ENCODE measurements at regions of chr17 and their contacts with region 1.

Region 1: DNA sequence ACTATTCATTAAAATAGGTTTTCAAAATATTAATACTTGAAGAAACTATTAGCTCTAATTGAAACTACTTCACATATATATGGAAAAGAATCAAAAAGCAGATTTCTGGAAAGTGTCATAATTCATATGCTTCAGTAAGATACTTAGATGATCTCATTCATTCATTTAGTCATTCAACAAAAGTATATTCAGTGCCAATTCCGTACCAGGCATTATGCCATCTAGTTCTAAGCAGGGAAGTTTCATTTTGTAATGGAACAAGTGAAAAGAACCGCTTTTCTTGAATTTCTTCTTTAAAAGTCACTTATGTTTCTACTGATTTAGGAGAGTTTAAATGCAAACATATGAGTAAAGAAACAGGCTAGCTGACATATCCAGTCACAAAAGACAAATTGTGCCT is 118.3 kb upstream of the FAM20A start:
- DNase-seq: no peak
- ATAC-seq: no peak
- H3K4me3 ChIP-seq: no peak overlapping the region
- H3K27ac ChIP-seq: no peak overlapping the region
- H3K4me1 ChIP-seq: no peaks in the 10 kb centered on the region
- H3K27me3 ChIP-seq: no peaks in the 10 kb centered on the region
- CTCF ChIP-seq: no peak
- EP300 ChIP-seq: no peak
- POLR2A ChIP-seq: no peak
- RAD21 ChIP-seq: no peak

Region 2: GRCh38 chr17:68676856-68677255 is 42.6 kb before region 1 on chr17:
- CTCF ChIA-PET with region 1: no interaction called
- POLR2A ChIA-PET with region 1: no interaction called
- in situ Hi-C with region 1: no loop called
- intact Hi-C with region 1: loop called (anchors 5 kb)
- DNase-seq: no peak
- ATAC-seq: peak; percentile 43; the same call in 2 of the 3 replicates
- H3K4me3 ChIP-seq: no peak overlapping the region
- H3K27ac ChIP-seq: no peak overlapping the region
- H3K4me1 ChIP-seq: no peaks in the 10 kb centered on the region
- H3K27me3 ChIP-seq: peaks cover 0 to 35% of the 10 kb centered on the region in 2 experiments; a peak in 4 of 5 replicates
- CTCF ChIP-seq: peak; percentile 23; the same call in 1 of the 2 replicates
- EP300 ChIP-seq: no peak
- POLR2A ChIP-seq: no peak
- RAD21 ChIP-seq: no peak